Sciatic nerve (tissue), 2 donors: ENCODE measurements at regions of chr17 and their contacts with region 1.

Region 1: DNA sequence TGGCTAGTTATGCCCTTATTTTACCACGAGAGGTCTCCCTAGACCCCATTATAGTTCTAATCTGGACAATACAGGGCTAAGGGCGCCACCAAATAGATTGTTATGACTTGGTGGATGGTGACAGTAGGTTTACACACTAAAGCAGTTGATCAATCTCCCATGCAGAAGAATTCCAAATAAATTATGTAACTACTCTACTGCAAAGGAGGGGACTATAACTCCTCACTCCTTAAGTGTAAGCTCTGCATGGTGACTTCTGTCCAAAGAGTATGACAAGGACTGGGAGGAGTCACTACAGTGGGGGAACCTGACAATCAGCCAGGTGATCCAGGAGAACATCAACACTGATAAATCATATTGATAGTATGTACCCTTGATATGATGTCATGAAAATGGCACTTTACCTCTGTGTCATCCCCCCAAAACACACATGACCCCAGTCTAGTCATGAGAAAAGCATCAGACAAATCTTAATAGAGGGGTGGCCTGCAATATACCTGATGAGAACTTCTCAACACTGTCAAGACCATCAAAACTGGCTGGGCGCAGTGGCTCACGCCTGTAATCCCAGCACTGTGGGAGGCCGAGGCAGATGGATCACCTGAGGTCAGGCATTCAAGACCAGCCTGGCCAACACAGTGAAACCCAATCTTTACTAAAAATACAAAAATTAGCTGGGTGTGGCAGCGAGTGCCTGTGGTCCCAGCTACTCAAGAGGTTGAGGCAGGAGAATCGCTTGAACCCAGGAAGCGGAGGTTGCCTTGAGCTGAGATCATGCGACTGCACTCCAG is 20.1 kb upstream of the YPEL2 start:
- DNase-seq: no peak
- ATAC-seq: peak; percentile 95

Region 2: GRCh38 chr17:59440784-59441441 is 129.6 kb after region 1 on chr17:
- intact Hi-C with region 1: loop called (anchors 5 kb)
- DNase-seq: peak; percentile 95
- ATAC-seq: peak; percentile 98

Region 3: GRCh38 chr17:59725691-59726090 is 414.4 kb after region 1 on chr17:
- intact Hi-C with region 1: no loop called
- DNase-seq: no peak
- ATAC-seq: peak; percentile 93